WTC11 (cell line): ENCODE measurements at regions of chr22 and their contacts with region 1.

Region 1: DNA sequence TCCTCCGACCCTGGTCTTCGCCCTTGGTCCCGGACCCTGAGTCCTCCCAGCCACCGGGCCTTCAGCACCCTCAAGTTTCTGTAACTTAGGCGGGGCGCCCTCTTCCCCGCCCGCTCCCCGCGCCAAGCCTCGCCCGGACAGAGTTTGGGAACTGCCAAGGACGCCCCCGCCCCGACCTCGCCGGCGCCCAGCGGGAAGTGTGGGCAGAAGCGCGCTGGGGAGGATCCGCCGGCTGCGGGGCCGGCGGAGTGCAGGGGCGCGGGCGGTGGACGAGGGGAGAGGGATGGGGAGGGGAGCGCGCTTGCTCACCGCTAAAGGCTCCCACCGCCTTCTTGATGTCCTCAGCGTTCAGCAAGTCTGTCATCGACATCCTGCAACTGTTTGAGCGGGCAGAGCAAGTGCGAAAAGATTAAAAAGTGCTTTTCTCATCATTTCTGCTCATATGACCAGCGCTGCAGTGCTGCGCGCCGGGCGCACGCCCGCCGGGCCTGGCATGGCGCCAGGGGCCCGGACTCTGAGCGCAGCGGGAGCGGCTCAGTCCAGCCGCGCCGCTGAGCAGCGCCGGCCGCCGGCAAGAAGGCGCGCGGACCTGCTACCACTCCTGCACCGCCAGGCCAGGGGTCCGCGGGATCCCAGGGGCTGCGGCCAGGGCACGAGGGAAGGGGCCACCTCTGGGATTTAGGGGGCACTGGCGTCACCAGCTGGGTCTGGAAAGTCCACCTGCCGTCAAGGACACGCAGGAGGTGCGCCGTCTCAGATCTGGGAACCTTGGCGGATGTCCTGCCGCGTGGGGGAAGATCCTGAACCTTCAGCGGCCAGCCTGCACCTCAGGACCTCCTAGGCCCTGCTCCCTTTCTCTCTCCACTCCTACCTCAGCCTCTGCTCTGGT is at the start of gene PVALB:
- DNase-seq: peak; percentile 46
- ATAC-seq: peak; percentile 58
- H3K4me3 Mint-ChIP-seq: peak within 1 kb of the TSS; percentile 69
- H3K27ac Mint-ChIP-seq: no peak within 1 kb of the TSS
- H3K4me1 Mint-ChIP-seq: peaks cover 28% of the 10 kb centered on the region
- H3K27me3 Mint-ChIP-seq: peaks cover 52% of the 10 kb centered on the region
- CTCF ChIP-seq: no peak
- total RNA-seq, gene PVALB: 2.7 to 5.9 TPM (median 4.5 TPM) in 3 replicates

Region 2: DNA sequence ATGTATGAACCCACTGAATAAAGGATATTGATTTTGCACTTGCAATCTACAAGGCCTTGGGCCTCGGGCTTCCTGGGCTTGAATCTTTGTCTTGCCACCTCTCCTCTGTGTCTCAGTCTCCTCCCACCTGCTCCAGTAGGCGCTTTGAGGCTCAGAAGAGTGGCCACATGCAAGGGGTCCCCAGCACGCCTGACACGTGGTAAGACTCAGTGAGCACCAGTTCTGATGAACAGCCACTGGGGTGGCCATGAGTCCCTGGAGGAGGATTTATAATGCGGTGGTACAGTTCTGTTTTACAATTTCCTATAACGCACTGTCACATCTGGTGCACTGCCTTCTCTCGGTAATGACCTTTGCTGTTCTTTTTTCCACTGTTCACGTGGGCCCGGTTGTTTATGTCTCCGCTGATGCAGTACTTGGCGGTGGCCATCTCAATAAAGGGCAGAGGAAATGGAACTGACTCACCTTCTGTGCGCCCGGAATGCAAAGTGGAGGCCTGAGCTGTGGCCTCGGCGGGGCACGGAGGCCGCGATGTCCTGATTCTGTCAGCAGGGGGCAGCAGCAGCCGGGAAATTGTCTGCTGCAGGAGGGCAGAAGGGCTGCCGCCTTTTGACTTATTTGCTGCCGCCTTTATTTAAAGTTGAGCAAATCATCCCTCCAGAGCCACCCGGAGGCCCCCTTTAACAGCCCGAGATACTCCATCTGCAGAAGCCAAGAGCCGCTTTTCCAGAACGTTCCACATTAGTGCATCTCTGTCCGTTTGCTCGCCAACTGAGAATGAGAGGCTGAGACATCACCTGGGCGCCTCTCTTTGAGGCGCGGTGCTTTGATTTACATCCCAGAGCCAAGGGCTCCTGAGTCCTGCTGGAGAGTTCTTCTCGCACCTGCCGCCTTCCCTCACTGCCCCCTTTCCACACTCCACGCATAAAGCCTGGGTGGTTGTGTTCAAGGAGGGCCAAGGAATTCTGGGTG is 34.9 kb before region 1 on chr22:
- CTCF ChIA-PET with region 1: interaction called, 10 read pairs
- POLR2A ChIA-PET with region 1: no interaction called
- DNase-seq: peak; percentile 91
- ATAC-seq: peak; percentile 93
- H3K4me3 Mint-ChIP-seq: no peak overlapping the region; the same call in none of the 2 replicates
- H3K27ac Mint-ChIP-seq: no peak overlapping the region
- H3K4me1 Mint-ChIP-seq: peaks cover 23% of the 10 kb centered on the region
- H3K27me3 Mint-ChIP-seq: peaks cover 40% of the 10 kb centered on the region
- CTCF ChIP-seq: peak; percentile 82